Colonic mucosa (tissue), 4 donors: ENCODE measurements at regions of chr2 and their contacts with region 1.

Region 1: GRCh38 chr2:11477994-11478393 is 12.0 kb upstream of the E2F6 start:
- DNase-seq: peak; percentile 91
- H3K4me3 ChIP-seq: no peak overlapping the region
- H3K27ac ChIP-seq: no peak overlapping the region
- H3K4me1 ChIP-seq: no peaks in the 10 kb centered on the region
- H3K27me3 ChIP-seq: peaks cover 17% of the 10 kb centered on the region
- CTCF ChIP-seq: peak; percentile 90

Region 2: DNA sequence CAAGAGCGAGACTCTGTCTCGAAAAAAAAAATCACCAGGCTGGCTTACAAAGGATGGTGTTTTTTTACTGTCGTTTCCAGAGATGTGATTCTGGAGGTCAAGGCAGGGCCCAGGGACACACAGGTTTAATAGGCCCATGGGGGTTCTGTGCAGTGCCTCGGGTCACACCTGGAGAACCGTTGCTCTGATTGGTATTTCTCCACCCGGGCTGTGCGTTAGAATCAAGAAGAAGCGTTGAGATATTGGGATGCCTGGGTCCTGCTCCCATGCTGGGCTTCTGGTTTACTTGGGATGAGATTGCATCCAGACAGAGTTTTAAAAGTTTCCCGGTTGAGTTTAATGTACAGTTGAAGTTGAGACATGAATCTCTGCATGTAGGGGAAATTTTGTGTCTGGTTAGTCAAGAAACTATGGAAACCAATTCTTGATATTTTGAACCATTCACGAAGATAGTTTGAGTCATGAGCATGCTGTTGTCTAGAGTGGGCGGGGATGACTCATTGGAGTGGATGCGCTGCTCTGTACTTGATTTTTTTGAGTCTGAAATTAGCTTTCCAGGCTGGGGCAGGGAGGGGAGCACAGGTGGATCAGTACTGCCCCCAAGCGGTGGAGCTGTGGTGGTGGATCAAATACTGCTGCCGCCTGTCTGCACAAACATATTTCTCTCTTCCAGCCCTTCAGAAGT is 106.0 kb after region 1 on chr2:
- intact Hi-C with region 1: loop called (anchors 2 kb)
- DNase-seq: peak; percentile 55
- H3K4me3 ChIP-seq: no peak overlapping the region
- H3K27ac ChIP-seq: peak overlapping the region; percentile 22
- H3K4me1 ChIP-seq: no peaks in the 10 kb centered on the region
- H3K27me3 ChIP-seq: no peaks in the 10 kb centered on the region
- CTCF ChIP-seq: peak; percentile 84

Region 3: GRCh38 chr2:11688222-11689069 is 210.5 kb after region 1 on chr2:
- intact Hi-C with region 1: no loop called
- DNase-seq: peak; percentile 83
- H3K4me3 ChIP-seq: no peak overlapping the region
- H3K27ac ChIP-seq: no peak overlapping the region
- H3K4me1 ChIP-seq: peaks cover 6% of the 10 kb centered on the region
- H3K27me3 ChIP-seq: no peaks in the 10 kb centered on the region
- CTCF ChIP-seq: peak; percentile 91